CD4-positive, alpha-beta memory T cell (primary cell): ENCODE measurements at regions of chr17 and their contacts with region 1.

Region 1: DNA sequence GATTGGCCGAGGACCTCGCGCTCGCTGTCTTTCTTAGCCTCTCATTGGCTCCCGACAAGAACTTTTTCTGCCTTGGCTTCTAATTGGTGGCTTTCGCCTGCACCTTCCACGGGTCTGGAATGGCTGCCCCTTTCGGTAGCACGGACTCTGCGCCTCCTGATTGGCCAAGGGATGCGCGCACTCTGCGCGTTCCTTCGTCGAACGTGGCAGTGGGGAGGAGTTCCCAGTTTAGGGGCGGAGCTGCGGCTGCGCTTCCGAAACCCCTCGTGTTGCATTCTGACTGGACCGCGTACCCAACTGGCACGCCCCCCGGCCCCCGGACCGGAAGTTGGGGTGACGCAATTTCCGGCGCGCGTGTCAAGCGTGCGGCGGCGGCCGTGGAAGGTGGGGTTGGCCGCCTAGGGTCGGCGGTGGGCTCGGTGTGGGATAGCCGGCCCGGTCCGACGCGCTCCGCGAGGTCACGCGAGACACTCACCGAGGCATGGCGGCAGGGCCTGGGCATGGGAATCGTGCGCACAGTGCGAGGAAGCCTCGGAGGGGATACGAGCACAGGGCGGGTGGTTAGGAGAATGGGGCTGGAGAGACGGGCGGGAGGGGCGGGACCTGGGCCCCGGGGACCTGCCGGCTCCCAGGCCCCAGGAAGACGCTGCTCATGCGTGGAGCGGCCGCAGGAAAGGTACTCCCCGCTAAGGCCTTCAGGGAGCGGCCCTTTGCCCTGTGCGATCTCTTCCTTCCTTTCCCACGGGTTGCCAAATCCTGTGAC is 602 bp upstream of the P4HB start:
- DNase-seq: peak; percentile 100
- H3K4me3 ChIP-seq: peak overlapping the region; percentile 0 to 60
- H3K4me3 Mint-ChIP-seq: peak overlapping the region; percentile 86 to 93 (median 91)
- H3K27ac ChIP-seq: peak overlapping the region; percentile 92
- H3K27ac Mint-ChIP-seq: peak overlapping the region; percentile 98 to 99 (median 98)
- H3K4me1 ChIP-seq: peaks cover 40% of the 10 kb centered on the region
- H3K4me1 Mint-ChIP-seq: peaks cover 17 to 58% (median 36%) of the 10 kb centered on the region in 4 donors
- H3K27me3 ChIP-seq: no peaks in the 10 kb centered on the region
- H3K27me3 Mint-ChIP-seq: peaks cover 0 to 6% of the 10 kb centered on the region in 2 donors

Region 2: DNA sequence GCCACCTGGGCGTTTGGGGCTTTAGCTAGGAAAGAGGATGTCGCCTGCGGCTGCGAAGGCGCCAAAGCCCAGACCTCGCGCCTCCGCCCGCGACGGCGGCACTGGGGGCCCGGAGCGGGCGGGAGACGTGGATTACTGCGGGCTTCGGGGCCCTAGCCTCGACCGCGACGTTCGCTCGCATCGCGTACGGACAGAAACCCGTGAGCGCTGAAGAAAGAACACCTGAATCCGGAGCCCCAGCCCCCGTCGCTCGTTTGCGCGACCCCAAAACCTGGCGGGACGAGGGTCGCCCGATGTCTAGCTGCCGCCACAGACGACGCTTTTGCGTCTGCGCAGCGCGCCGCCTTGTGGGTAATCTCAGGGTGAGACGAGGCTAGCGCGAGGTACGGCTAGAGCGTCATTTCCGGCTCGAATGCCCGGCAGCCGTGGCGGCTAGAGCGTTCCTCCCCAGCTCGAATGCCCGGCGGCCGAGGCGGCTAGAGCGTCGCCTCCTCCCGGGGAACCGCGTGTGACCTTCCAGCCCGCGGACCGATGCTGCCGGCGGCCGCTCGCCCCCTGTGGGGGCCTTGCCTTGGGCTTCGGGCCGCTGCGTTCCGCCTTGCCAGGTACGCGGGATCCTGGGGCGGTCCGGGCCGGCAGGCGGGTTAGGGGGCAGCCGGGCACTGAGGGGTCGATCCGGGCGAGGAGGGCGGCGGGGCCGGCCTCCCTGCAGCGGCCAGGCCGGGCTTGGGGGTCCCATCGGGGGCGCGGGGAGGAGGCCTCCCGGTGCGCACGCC is 157.8 kb before region 1 on chr17 and contains the start of gene MRPL12:
- CTCF ChIA-PET with region 1: no interaction called
- POLR2A ChIA-PET with region 1: interaction called, 4 read pairs
- intact Hi-C with region 1: loop called (anchors 2 kb)
- DNase-seq: peak; percentile 83 to 89 (median 85)
- H3K4me3 ChIP-seq: peak within 1 kb of the TSS; percentile 61 to 63
- H3K4me3 Mint-ChIP-seq: peak within 1 kb of the TSS; percentile 87 to 94 (median 90)
- H3K27ac ChIP-seq: peak within 1 kb of the TSS; percentile 87
- H3K27ac Mint-ChIP-seq: peak within 1 kb of the TSS; percentile 92 to 97 (median 94)
- H3K4me1 ChIP-seq: peaks cover 32% of the 10 kb centered on the region
- H3K4me1 Mint-ChIP-seq: peaks cover 8 to 40% (median 26%) of the 10 kb centered on the region in 4 donors
- H3K27me3 ChIP-seq: no peaks in the 10 kb centered on the region
- H3K27me3 Mint-ChIP-seq: no peaks in the 10 kb centered on the region
- total RNA-seq, gene MRPL12: 21.9 to 25.6 TPM

Region 3: DNA sequence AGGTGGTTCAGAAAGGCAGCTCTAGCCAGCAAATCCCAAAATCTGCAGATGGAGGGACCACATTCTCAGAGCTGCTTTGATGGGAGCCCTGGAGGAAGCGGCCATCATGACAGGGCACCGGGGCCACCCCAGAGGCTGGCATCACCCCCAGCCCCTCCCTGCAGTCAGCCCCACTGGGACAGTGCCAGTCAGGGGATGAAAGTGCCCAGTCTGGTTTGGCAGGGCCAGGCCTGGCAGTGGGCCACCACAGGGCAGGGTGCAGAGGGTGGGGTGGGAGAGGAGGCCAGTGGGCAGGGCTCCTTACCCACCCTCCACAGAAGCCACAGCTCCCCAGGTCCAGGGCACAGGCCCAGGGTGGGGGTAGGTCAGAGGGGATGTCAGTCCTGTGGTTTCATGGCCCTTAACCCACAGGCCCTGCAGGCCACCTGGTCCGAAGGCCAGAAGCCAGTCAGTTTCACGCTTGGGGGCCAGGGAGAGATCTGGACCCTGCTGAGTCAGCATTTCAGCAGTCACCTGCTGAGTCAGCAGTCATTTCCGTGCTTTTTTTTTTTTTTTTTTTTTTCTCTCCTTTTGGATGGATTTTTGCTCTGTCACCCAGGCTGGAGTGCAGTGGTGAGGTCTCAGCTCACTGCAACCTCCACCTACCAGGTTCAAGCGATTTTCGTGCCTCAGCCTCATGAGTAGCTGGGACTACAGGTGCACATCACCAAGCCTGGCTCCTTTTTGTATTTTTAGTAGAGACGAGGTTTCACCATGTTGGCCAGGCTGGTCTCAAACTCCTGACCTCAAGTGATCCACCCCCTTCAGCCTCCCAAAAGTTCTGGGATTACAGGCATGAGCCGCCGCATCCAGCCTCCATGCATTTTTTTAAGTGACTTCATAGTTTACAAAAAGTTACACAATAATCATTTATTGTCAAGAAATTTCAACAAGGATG is 138.5 kb before region 1 on chr17:
- CTCF ChIA-PET with region 1: no interaction called
- POLR2A ChIA-PET with region 1: no interaction called
- intact Hi-C with region 1: no loop called
- DNase-seq: no peak
- H3K4me3 ChIP-seq: no peak overlapping the region
- H3K4me3 Mint-ChIP-seq: no peak overlapping the region
- H3K27ac ChIP-seq: no peak overlapping the region
- H3K27ac Mint-ChIP-seq: no peak overlapping the region
- H3K4me1 ChIP-seq: no peaks in the 10 kb centered on the region
- H3K4me1 Mint-ChIP-seq: peaks cover 0 to 3% (median 1%) of the 10 kb centered on the region in 4 donors
- H3K27me3 ChIP-seq: no peaks in the 10 kb centered on the region
- H3K27me3 Mint-ChIP-seq: peaks cover 9 to 11% of the 10 kb centered on the region in 2 donors

Region 4: DNA sequence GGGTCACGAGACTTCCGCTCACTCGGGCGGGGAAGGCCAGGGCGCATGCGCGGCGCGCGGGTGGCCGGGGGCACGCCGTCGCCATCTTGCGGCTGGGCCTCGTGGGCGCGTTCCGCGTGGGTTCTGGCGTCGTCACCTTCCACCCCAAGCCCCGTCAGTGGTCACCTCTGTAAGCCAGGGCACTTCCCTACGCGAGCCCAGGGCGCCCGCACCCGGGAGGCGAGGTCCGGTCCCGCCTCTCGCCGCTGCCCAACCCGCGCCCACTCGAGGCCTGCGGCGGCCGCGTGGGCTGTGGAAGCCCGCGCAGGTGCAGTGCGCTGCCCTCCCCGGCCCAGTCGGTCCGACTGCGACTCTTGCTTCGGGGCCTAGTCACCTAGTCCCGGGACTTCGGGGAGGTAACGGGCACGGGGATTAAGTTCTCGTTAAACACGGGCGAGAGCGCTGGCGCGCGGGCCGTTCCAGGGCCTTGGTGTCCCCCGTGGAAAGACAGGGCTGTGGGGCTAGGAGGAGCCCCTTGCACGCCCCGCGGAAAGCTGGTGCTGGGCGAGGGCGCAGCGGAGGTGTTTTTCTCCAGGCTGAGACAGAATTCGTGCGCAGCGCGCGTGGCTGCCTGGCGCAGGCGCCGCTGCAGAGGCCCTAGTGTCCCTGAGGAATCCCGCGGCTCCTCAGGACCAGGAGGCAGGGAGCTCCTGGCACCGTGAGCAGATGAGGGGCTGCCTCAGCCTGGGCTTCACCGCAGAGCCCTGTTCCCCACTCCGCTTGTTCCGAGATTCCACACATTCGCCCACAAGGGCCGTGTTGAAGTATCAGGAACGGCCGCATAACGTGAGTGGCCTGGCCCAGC is 10.7 kb after region 1 on chr17:
- CTCF ChIA-PET with region 1: interaction called, 3 read pairs
- POLR2A ChIA-PET with region 1: interaction called, 99 read pairs
- intact Hi-C with region 1: loop called (anchors 1 kb)
- DNase-seq: peak; percentile 95 to 97 (median 96)
- H3K4me3 ChIP-seq: peak overlapping the region; percentile 84 to 95
- H3K4me3 Mint-ChIP-seq: peak overlapping the region; percentile 81 to 91 (median 86)
- H3K27ac ChIP-seq: peak overlapping the region; percentile 95
- H3K27ac Mint-ChIP-seq: peak overlapping the region; percentile 93 to 97 (median 96)
- H3K4me1 ChIP-seq: peaks cover 50% of the 10 kb centered on the region
- H3K4me1 Mint-ChIP-seq: peaks cover 9 to 53% (median 30%) of the 10 kb centered on the region in 4 donors
- H3K27me3 ChIP-seq: no peaks in the 10 kb centered on the region
- H3K27me3 Mint-ChIP-seq: no peaks in the 10 kb centered on the region

Region 5: GRCh38 chr17:81917565-81918332 is 56.8 kb after region 1 on chr17 and contains the start of gene SIRT7:
- CTCF ChIA-PET with region 1: no interaction called
- POLR2A ChIA-PET with region 1: interaction called, 3 read pairs
- intact Hi-C with region 1: loop called (anchors 2 kb)
- DNase-seq: peak; percentile 79 to 81 (median 80)
- H3K4me3 ChIP-seq: peak within 1 kb of the TSS; percentile 30 to 66
- H3K4me3 Mint-ChIP-seq: peak within 1 kb of the TSS; percentile 86 to 95 (median 92)
- H3K27ac ChIP-seq: peak within 1 kb of the TSS; percentile 64
- H3K27ac Mint-ChIP-seq: peak within 1 kb of the TSS; percentile 80 to 94 (median 90)
- H3K4me1 ChIP-seq: peaks cover 27% of the 10 kb centered on the region
- H3K4me1 Mint-ChIP-seq: peaks cover 13 to 42% (median 26%) of the 10 kb centered on the region in 4 donors
- H3K27me3 ChIP-seq: no peaks in the 10 kb centered on the region
- H3K27me3 Mint-ChIP-seq: no peaks in the 10 kb centered on the region
- total RNA-seq, gene SIRT7: 87.8 to 91.9 TPM

Region 6: DNA sequence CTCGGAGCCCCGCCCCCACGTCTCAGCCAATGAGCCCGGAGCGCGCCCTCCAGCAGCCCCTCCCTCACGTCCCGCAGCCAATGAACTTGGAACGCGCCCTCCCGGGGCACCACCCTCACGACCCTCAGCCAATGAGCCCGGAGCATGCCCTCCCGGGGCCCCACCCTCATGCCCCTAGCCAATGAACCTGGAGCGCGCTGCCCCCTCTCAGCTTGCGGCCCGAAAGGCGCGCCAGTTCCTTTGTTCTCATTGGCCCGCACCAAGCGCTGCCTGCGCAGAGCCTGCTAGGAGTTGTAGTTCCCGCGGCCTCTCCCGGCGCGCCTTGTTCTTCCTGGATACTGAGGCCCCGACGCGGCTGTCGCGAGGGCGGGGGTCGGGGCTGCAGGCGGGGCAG is 162.0 kb after region 1 on chr17 and contains the start of gene LRRC45:
- CTCF ChIA-PET with region 1: no interaction called
- POLR2A ChIA-PET with region 1: no interaction called
- intact Hi-C with region 1: loop called (anchors 5 kb)
- DNase-seq: peak; percentile 99 to 100 (median 100)
- H3K4me3 ChIP-seq: peak within 1 kb of the TSS; percentile 44 to 72
- H3K4me3 Mint-ChIP-seq: peak within 1 kb of the TSS; percentile 81 to 89 (median 86)
- H3K27ac ChIP-seq: peak within 1 kb of the TSS; percentile 65
- H3K27ac Mint-ChIP-seq: peak within 1 kb of the TSS in 6 of 7 donors; percentile 68 to 89 (median 78)
- H3K4me1 ChIP-seq: peaks cover 28% of the 10 kb centered on the region
- H3K4me1 Mint-ChIP-seq: peaks cover 3 to 30% (median 18%) of the 10 kb centered on the region in 4 donors
- H3K27me3 ChIP-seq: no peaks in the 10 kb centered on the region
- H3K27me3 Mint-ChIP-seq: no peaks in the 10 kb centered on the region
- total RNA-seq, gene LRRC45: 18.0 to 18.7 TPM